CD4-positive, alpha-beta T cell (primary cell): ENCODE measurements at regions of chr7 and their contacts with region 1.

Region 1: DNA sequence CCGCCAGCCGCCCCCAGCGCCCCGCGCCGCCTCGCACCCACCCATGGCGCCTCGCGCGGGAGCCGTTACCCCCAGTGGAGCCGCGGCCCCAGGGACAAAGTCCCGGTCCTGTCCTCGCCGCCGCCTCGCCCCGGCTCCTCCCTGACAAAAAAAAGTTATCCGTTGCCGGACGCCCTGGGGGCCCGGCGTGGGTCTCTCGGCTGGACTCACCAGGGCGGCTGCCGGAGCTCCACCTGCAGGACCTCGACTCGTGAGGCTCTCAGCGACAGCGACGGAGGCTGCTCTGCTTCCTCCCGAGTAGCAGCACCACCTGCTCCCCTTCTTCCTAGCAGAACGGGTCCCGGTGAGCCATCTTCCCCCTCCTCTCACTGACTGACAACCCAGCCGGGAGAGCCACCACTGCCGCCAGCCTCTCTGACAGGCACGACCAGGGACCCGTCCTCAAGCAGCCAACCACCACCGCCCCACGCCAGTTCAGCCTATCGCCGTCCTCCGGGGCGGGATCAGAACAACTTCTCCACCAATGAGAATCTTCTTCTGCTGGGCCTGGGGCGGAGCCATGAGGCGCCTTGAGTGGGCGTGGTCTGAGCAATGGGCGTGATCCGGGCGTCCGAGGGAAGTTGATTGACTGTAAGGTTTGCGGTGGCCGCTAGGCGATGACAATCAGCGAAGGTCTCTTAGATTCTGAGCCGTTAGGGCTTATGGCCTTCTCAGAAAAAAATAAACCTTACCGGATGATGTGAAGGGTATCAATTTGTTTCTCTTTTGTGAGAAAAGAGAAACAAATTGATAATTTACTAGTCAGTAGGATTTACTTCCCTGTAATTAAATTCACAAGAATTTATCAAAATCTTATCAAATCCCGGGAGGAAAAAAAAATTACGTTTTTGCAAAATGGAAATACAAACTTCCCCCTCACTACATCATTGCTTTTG is at the start of gene HYCC1:
- DNase-seq: peak; percentile 97 to 99 (median 98)
- ATAC-seq: peak; percentile 96
- H3K4me3 ChIP-seq: peak within 1 kb of the TSS; percentile 87
- H3K4me3 Mint-ChIP-seq: peak within 1 kb of the TSS; percentile 99
- H3K27ac ChIP-seq: peak within 1 kb of the TSS; percentile 31 to 44
- H3K27ac Mint-ChIP-seq: peak within 1 kb of the TSS; percentile 83
- H3K4me1 ChIP-seq: peaks cover 19% of the 10 kb centered on the region
- H3K4me1 Mint-ChIP-seq: peaks cover 24% of the 10 kb centered on the region
- H3K27me3 ChIP-seq: no peaks in the 10 kb centered on the region
- H3K27me3 Mint-ChIP-seq: no peaks in the 10 kb centered on the region
- CTCF ChIP-seq: peak; percentile 65
- total RNA-seq, gene HYCC1: 12.4 to 13.1 TPM

Region 2: DNA sequence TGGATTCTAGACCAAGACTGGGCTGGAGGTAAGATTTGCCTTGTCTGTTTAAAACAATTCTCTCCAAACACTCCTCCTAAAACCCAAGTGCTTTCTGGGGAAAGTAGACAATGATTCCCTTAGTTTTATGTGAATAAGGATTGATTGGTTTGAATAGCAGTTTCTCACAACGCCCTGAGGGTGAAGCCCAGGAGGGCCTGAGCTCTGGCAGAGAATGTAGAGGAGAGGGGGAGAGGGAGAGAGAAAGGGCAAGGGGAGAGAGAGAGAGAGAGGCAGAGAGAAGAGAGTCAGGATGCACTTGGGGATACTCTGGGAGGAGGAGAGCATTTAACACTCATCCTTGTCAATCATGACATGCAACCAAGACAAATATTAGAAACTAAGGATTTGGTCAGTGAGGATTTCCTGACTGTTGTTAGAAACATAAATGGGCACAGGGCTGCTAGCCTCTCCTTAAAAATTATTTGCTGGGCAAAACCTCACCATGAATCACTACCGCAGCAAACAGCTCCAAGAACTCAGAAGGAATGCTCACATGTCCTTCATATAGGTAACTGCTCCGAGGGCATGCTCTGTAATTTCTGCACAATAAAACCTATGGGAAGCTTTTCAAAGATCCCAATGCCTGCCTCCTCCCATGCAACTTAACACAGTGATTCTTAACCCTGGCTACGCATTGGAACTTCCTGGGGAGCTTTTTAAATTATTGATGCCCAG is 601.8 kb before region 1 on chr7:
- CTCF ChIA-PET with region 1: no interaction called
- POLR2A ChIA-PET with region 1: no interaction called
- intact Hi-C with region 1: no loop called
- DNase-seq: no peak
- ATAC-seq: no peak
- H3K4me3 ChIP-seq: no peak overlapping the region
- H3K4me3 Mint-ChIP-seq: no peak overlapping the region
- H3K27ac ChIP-seq: no peak overlapping the region
- H3K27ac Mint-ChIP-seq: no peak overlapping the region
- H3K4me1 ChIP-seq: no peaks in the 10 kb centered on the region
- H3K4me1 Mint-ChIP-seq: no peaks in the 10 kb centered on the region
- H3K27me3 ChIP-seq: no peaks in the 10 kb centered on the region
- H3K27me3 Mint-ChIP-seq: peaks cover 4% of the 10 kb centered on the region
- CTCF ChIP-seq: no peak

Region 3: GRCh38 chr7:22822486-22823141 is 191.4 kb before region 1 on chr7 and contains the start of gene TOMM7:
- CTCF ChIA-PET with region 1: no interaction called
- POLR2A ChIA-PET with region 1: no interaction called
- intact Hi-C with region 1: loop called (anchors 2 to 5 kb)
- DNase-seq: peak; percentile 75 to 98 (median 84)
- ATAC-seq: peak; percentile 93
- H3K4me3 ChIP-seq: peak within 1 kb of the TSS; percentile 65
- H3K4me3 Mint-ChIP-seq: peak within 1 kb of the TSS; percentile 98
- H3K27ac ChIP-seq: peak within 1 kb of the TSS; percentile 46 to 66
- H3K27ac Mint-ChIP-seq: peak within 1 kb of the TSS; percentile 92
- H3K4me1 ChIP-seq: peaks cover 28% of the 10 kb centered on the region
- H3K4me1 Mint-ChIP-seq: peaks cover 49% of the 10 kb centered on the region
- H3K27me3 ChIP-seq: no peaks in the 10 kb centered on the region
- H3K27me3 Mint-ChIP-seq: peaks cover 15% of the 10 kb centered on the region
- CTCF ChIP-seq: no peak
- total RNA-seq, gene TOMM7: 503 to 549 TPM

Region 4: GRCh38 chr7:22854158-22855048 is 159.6 kb before region 1 on chr7:
- CTCF ChIA-PET with region 1: interaction called, 3 read pairs
- POLR2A ChIA-PET with region 1: interaction called, 3 read pairs
- intact Hi-C with region 1: loop called (anchors 2 to 5 kb)
- DNase-seq: peak; percentile 30 to 90 (median 68)
- ATAC-seq: peak; percentile 21
- H3K4me3 ChIP-seq: peak overlapping the region; percentile 97
- H3K4me3 Mint-ChIP-seq: peak overlapping the region; percentile 97
- H3K27ac ChIP-seq: peak overlapping the region; percentile 69 to 75
- H3K27ac Mint-ChIP-seq: peak overlapping the region; percentile 92
- H3K4me1 ChIP-seq: peaks cover 21% of the 10 kb centered on the region
- H3K4me1 Mint-ChIP-seq: peaks cover 30% of the 10 kb centered on the region
- H3K27me3 ChIP-seq: no peaks in the 10 kb centered on the region
- H3K27me3 Mint-ChIP-seq: peaks cover 3% of the 10 kb centered on the region
- CTCF ChIP-seq: peak; percentile 71

Region 5: DNA sequence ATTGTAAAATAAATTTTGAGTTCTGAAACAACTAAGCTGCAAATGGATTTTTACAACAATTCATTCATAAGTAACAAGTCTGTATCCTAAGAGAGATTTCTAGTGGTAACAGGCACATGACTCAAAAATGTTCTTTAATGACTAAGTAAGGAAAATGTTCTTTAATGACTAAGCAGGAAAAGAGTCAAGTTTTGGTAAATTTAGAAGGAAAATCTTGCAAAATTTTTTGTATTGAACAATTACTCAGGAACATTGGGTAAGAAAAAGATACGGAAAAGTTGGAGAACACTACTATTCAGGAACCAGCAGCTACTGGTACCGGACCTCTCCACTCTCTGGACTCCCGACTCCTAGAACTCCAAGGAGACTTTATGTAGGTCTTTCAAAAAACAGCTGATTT is 33.6 kb before region 1 on chr7:
- CTCF ChIA-PET with region 1: no interaction called
- POLR2A ChIA-PET with region 1: no interaction called
- intact Hi-C with region 1: no loop called
- DNase-seq: no peak
- ATAC-seq: no peak
- H3K4me3 ChIP-seq: no peak overlapping the region
- H3K4me3 Mint-ChIP-seq: no peak overlapping the region
- H3K27ac ChIP-seq: no peak overlapping the region
- H3K27ac Mint-ChIP-seq: no peak overlapping the region
- H3K4me1 ChIP-seq: no peaks in the 10 kb centered on the region
- H3K4me1 Mint-ChIP-seq: no peaks in the 10 kb centered on the region
- H3K27me3 ChIP-seq: no peaks in the 10 kb centered on the region
- H3K27me3 Mint-ChIP-seq: no peaks in the 10 kb centered on the region
- CTCF ChIP-seq: no peak

Region 6: DNA sequence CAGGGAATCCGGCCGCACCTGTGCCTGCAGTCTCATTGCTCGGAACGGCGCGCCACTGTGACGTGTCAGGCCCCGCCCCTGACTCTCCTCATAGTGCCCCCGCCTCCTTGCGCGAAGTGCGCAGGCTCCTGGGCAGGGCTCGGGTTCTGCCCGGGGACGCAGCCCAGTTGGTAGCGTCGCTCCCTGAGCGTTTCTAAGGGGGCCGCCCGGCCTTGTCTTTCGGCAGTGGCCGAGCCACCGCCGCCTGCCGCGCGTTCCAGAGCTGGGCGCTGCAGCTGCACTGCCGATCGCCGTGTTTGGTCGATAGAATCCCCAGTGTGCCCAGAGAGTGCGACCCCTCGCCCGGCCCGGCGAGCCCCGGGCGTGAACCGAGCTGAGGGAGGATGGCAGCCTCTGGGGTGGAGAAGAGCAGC is 91.7 kb after region 1 on chr7 and contains the start of gene KLHL7:
- CTCF ChIA-PET with region 1: no interaction called
- POLR2A ChIA-PET with region 1: interaction called, 8 read pairs
- intact Hi-C with region 1: loop called (anchors 2 to 5 kb)
- DNase-seq: peak; percentile 89 to 98 (median 96)
- ATAC-seq: peak; percentile 94
- H3K4me3 ChIP-seq: peak within 1 kb of the TSS; percentile 98
- H3K4me3 Mint-ChIP-seq: peak within 1 kb of the TSS; percentile 98
- H3K27ac ChIP-seq: peak within 1 kb of the TSS; percentile 94
- H3K27ac Mint-ChIP-seq: peak within 1 kb of the TSS; percentile 96
- H3K4me1 ChIP-seq: peaks cover 19% of the 10 kb centered on the region
- H3K4me1 Mint-ChIP-seq: peaks cover 52% of the 10 kb centered on the region
- H3K27me3 ChIP-seq: no peaks in the 10 kb centered on the region
- H3K27me3 Mint-ChIP-seq: no peaks in the 10 kb centered on the region
- CTCF ChIP-seq: no peak
- total RNA-seq, gene KLHL7: 14.3 to 19.6 TPM

Region 7: GRCh38 chr7:23181684-23182553 is 167.9 kb after region 1 on chr7 and contains the start of gene NUP42:
- CTCF ChIA-PET with region 1: no interaction called
- POLR2A ChIA-PET with region 1: no interaction called
- intact Hi-C with region 1: loop called in 1 of 2 experiments (anchors 2 kb)
- DNase-seq: peak; percentile 87 to 98 (median 92)
- ATAC-seq: peak; percentile 91
- H3K4me3 ChIP-seq: peak within 1 kb of the TSS; percentile 88
- H3K4me3 Mint-ChIP-seq: peak within 1 kb of the TSS; percentile 96
- H3K27ac ChIP-seq: peak within 1 kb of the TSS; percentile 71 to 81
- H3K27ac Mint-ChIP-seq: peak within 1 kb of the TSS; percentile 97
- H3K4me1 ChIP-seq: peaks cover 18% of the 10 kb centered on the region
- H3K4me1 Mint-ChIP-seq: peaks cover 29% of the 10 kb centered on the region
- H3K27me3 ChIP-seq: no peaks in the 10 kb centered on the region
- H3K27me3 Mint-ChIP-seq: no peaks in the 10 kb centered on the region
- CTCF ChIP-seq: no peak
- total RNA-seq, gene NUP42: 19.4 to 20.1 TPM

Region 8: DNA sequence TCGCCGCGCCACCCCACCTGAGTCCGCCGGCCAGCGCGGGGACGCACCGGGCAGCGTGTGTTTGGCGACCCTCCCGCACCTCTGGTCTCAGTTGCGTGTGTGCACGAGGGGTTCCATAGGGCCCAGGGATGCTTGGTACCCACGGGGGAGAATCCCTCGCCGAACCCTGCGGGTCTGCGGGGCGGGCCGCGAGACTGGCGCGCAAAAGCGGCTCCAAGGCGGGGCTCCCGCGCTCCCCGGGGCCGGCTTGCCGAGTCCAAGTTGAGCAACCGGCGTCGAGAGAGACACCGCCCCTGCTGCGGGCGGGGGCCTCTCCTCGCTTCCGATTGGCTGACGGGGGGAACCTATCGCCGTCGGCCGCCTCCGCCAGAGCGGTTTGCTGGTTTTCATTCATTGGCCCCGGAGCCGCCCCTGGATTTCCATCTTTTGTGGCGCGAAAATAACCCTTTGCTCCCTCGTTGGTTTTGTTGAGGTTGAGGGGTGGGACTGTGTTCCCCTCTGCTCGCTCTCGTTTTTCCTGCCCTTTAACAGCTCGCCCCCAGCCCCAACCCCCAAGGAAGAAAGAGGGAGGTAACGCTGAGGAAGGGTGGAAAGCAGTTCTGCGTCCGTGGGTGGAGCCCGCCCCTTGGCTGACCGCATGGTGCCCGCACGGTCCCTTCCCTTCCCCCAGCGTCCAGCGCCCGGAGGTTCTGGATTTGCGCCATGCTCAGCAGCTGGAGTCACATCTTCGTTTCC is 460.3 kb after region 1 on chr7:
- CTCF ChIA-PET with region 1: no interaction called
- POLR2A ChIA-PET with region 1: no interaction called
- intact Hi-C with region 1: loop called in 1 of 2 experiments (anchors 10 kb)
- DNase-seq: peak in 7 of 14 experiments; percentile 25 to 73 (median 44)
- ATAC-seq: peak; percentile 38
- H3K4me3 ChIP-seq: no peak overlapping the region
- H3K4me3 Mint-ChIP-seq: peak overlapping the region; percentile 11
- H3K27ac ChIP-seq: no peak overlapping the region
- H3K27ac Mint-ChIP-seq: no peak overlapping the region
- H3K4me1 ChIP-seq: peaks cover 40% of the 10 kb centered on the region
- H3K4me1 Mint-ChIP-seq: peaks cover 37% of the 10 kb centered on the region
- H3K27me3 ChIP-seq: peaks cover 50 to 96% of the 10 kb centered on the region in 2 experiments
- H3K27me3 Mint-ChIP-seq: peaks cover 79% of the 10 kb centered on the region
- CTCF ChIP-seq: no peak